ENCODE measurements at regions of chr15 and their contacts with region 1.

Region 1: GRCh38 chr15:38683382-38684242 is 119.0 kb upstream of the RASGRP1 start:
- DNase-seq: peak in 1 of 2 donors; percentile 36
- H3K4me3 ChIP-seq: no peak overlapping the region
- CTCF ChIP-seq: no peak
- POLR2A ChIP-seq: no peak

Region 2: GRCh38 chr15:38563723-38564519 is 119.7 kb before region 1 on chr15:
- intact Hi-C with region 1: loop called (anchors 5 kb)
- DNase-seq: peak; percentile 43 to 91
- H3K4me3 ChIP-seq: peak overlapping the region; percentile 22
- CTCF ChIP-seq: no peak
- POLR2A ChIP-seq: no peak

Region 3: GRCh38 chr15:38651328-38652038 is 32.1 kb before region 1 on chr15:
- intact Hi-C with region 1: no loop called
- DNase-seq: no peak
- H3K4me3 ChIP-seq: no peak overlapping the region
- CTCF ChIP-seq: no peak
- POLR2A ChIP-seq: no peak

Measured in lower leg skin (tissue), 4 donors.